Panc1 (cell line): ENCODE measurements at regions of chr9 and their contacts with region 1.

Region 1: DNA sequence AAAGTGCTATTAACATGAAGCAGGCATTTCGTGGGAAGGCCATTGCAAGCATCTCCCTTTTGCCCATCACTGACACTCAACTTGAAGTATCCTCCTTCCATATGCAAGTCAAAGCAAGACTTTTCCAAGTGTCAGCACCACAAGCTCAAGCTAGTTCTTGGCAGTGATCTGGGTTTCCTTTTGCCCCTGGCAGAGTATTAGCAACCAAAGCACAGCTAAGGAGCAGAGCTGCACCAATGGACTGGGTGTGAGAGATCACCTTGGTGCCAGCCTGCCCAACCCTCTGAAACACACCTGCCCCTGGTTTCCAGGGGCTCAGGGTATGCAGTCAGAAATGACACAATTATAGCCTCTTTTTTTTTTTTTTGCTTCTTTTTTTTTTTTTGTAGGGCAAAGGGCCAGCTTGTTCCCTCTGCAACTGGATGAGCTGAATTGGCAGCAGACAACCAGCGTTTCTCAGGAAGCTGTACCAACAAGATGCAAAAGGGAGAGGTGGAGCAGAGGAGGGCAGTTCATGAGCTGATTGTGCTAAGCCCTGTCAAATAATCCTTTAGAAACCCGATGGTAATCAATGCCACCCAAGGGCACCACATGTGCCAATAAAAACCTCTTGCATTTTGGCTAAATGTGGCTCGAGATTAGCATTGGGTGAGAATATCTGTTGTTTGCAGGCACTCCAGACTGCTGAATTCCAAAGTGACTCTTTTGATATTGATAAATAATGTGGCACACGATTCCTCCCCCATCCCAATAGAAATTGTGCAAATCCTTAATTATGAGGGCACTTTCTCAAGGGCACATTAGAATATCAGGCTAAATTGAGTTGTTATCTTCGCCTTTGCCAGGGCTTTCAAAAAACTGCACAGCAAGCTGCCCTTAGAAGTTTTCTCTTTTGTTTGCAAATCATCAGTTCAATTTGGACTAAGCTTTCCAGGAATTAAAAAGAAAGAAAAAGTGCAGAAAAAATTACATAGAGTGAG is 192.4 kb downstream of the GAS1 start:
- DNase-seq: no peak
- ATAC-seq: no peak
- H3K4me3 ChIP-seq: no peak overlapping the region
- H3K27ac ChIP-seq: no peak overlapping the region
- H3K4me1 ChIP-seq: no peaks in the 10 kb centered on the region
- H3K27me3 ChIP-seq: no peaks in the 10 kb centered on the region
- CTCF ChIP-seq: no peak

Region 2: DNA sequence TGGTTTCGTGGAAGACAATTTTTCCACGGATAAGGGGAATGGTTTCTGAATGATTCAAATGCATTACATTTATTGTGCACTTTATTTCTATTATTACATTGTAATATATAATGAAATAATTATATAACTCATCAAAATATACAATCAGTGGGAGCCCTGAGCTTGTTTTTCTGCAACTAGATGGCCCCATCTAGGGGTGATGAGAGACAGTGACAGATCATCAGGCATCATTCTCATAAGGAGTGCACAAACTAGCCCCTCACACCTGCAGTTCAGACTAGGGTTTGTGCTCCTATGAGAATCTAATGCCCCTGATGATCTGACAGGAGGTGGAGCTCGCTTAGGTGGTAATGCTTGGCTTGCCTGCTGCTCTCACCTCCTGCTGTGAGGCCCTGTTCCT is 478.9 kb before region 1 on chr9:
- CTCF ChIA-PET with region 1: no interaction called
- POLR2A ChIA-PET with region 1: interaction called, 11 read pairs
- in situ Hi-C with region 1: no loop called
- intact Hi-C with region 1: no loop called
- DNase-seq: no peak
- ATAC-seq: no peak
- H3K4me3 ChIP-seq: no peak overlapping the region
- H3K27ac ChIP-seq: no peak overlapping the region
- H3K4me1 ChIP-seq: peaks cover under 1% of the 10 kb centered on the region; the same call in 1 of the 2 replicates
- H3K27me3 ChIP-seq: no peaks in the 10 kb centered on the region
- CTCF ChIP-seq: peak; percentile 20; the same call in 1 of the 2 replicates

Region 3: GRCh38 chr9:86614871-86615849 is 139.7 kb before region 1 on chr9:
- CTCF ChIA-PET with region 1: no interaction called
- POLR2A ChIA-PET with region 1: no interaction called
- in situ Hi-C with region 1: no loop called
- intact Hi-C with region 1: no loop called
- DNase-seq: no peak
- ATAC-seq: no peak
- H3K4me3 ChIP-seq: no peak overlapping the region
- H3K27ac ChIP-seq: no peak overlapping the region
- H3K4me1 ChIP-seq: no peaks in the 10 kb centered on the region
- H3K27me3 ChIP-seq: no peaks in the 10 kb centered on the region
- CTCF ChIP-seq: peak; percentile 35